CD4-positive, alpha-beta memory T cell (primary cell): ENCODE measurements at regions of chr9 and their contacts with region 1.

Region 1: DNA sequence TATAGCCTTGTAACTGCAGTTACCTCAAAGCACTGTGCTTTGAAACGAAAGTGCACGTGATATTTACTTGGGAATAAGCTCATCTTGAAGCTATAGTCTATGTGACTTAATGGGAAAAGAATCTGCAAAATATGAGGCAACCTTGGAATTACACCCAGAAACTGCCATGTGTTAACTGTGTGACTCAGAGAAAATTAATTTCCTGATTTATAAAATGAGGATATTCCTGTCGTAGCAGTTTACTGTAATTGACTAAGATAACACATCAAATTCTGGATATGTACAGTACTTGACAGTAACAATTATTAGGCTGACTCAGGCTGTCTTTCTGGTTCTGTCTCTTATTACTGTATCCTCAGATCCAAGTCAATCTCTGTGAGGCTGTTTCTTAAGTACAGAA is 1079.9 kb upstream of the ACO1 start:
- DNase-seq: no peak
- H3K4me3 ChIP-seq: no peak overlapping the region
- H3K4me3 Mint-ChIP-seq: no peak overlapping the region
- H3K27ac ChIP-seq: no peak overlapping the region
- H3K27ac Mint-ChIP-seq: no peak overlapping the region
- H3K4me1 ChIP-seq: peaks cover 25% of the 10 kb centered on the region
- H3K4me1 Mint-ChIP-seq: peaks cover 21 to 32% (median 26%) of the 10 kb centered on the region in 4 donors
- H3K27me3 ChIP-seq: no peaks in the 10 kb centered on the region
- H3K27me3 Mint-ChIP-seq: no peaks in the 10 kb centered on the region

Region 2: DNA sequence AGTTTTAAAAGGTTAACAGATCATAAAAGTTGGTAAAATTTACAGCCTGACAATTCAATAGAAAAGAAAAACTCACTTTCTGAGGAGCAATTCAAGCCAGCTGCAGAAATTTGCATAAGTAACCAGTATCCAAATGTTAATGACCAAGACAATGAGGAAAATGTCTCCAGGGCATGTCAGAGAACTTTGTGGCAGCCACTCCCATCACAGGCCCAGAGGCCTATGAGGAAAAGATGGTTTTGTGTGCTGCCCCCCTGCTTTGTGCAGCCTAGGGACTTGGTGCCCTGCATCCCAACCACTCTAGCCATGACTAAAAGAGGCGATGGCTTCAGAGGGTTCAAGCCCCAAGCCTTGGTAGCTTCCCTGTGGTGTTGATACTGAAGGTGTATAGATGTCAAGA is 326.6 kb before region 1 on chr9:
- CTCF ChIA-PET with region 1: no interaction called
- POLR2A ChIA-PET with region 1: no interaction called
- intact Hi-C with region 1: no loop called
- DNase-seq: no peak
- H3K4me3 ChIP-seq: no peak overlapping the region
- H3K4me3 Mint-ChIP-seq: no peak overlapping the region
- H3K27ac ChIP-seq: no peak overlapping the region
- H3K27ac Mint-ChIP-seq: no peak overlapping the region
- H3K4me1 ChIP-seq: no peaks in the 10 kb centered on the region
- H3K4me1 Mint-ChIP-seq: no peaks in the 10 kb centered on the region
- H3K27me3 ChIP-seq: no peaks in the 10 kb centered on the region
- H3K27me3 Mint-ChIP-seq: peaks cover 0 to 2% of the 10 kb centered on the region in 2 donors

Region 3: GRCh38 chr9:31335529-31336234 is 31.1 kb after region 1 on chr9:
- CTCF ChIA-PET with region 1: no interaction called
- POLR2A ChIA-PET with region 1: no interaction called
- intact Hi-C with region 1: loop called (anchors 5 kb)
- DNase-seq: peak in 4 of 5 donors; percentile 15 to 46 (median 18)
- H3K4me3 ChIP-seq: no peak overlapping the region
- H3K4me3 Mint-ChIP-seq: peak overlapping the region in 7 of 8 donors; percentile 43 to 79 (median 64)
- H3K27ac ChIP-seq: no peak overlapping the region
- H3K27ac Mint-ChIP-seq: peak overlapping the region; percentile 62 to 89 (median 80)
- H3K4me1 ChIP-seq: peaks cover 35% of the 10 kb centered on the region
- H3K4me1 Mint-ChIP-seq: peaks cover 5 to 28% (median 18%) of the 10 kb centered on the region in 4 donors
- H3K27me3 ChIP-seq: no peaks in the 10 kb centered on the region
- H3K27me3 Mint-ChIP-seq: no peaks in the 10 kb centered on the region

Region 4: DNA sequence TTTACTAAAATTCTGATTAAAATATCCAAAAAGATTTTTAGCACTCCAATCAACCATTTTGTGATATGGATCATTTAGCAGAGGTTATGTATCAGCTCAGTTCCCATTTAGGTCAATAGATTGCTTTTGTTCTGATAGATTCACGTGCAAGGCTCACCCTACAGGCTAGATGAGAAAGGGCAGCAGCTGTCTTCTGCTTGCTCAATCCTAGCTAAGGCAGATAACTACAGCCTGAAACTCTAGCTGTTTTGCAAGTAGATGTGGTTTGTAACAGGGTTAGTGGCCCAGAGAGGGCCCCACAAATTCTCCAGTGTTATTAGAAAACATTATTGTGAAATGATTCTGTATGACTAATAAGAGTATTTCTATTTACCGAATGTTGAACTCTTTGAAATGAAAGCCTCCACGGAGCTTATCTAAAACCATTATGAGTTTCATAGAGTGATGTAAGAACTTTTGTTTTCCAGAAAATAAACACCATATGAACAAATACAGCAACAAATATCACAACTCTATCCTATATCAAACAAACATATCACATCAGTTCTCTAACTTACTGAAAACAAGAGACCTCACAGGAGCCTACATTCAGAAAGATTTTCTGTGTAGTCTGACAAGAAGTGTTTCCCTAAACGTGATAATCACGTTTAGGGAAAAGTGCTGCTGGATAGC is 237.9 kb after region 1 on chr9:
- CTCF ChIA-PET with region 1: interaction called, 14 read pairs
- POLR2A ChIA-PET with region 1: interaction called, 4 read pairs
- intact Hi-C with region 1: loop called (anchors 1 kb)
- DNase-seq: peak; percentile 36 to 46 (median 40)
- H3K4me3 ChIP-seq: no peak overlapping the region
- H3K4me3 Mint-ChIP-seq: peak overlapping the region in 7 of 8 donors; percentile 32 to 72 (median 52)
- H3K27ac ChIP-seq: no peak overlapping the region
- H3K27ac Mint-ChIP-seq: peak overlapping the region in 5 of 7 donors; percentile 3 to 89 (median 88)
- H3K4me1 ChIP-seq: peaks cover 19% of the 10 kb centered on the region
- H3K4me1 Mint-ChIP-seq: peaks cover 17 to 22% (median 19%) of the 10 kb centered on the region in 4 donors
- H3K27me3 ChIP-seq: no peaks in the 10 kb centered on the region
- H3K27me3 Mint-ChIP-seq: no peaks in the 10 kb centered on the region

Region 5: GRCh38 chr9:31730398-31730797 is 425.8 kb after region 1 on chr9:
- CTCF ChIA-PET with region 1: no interaction called
- POLR2A ChIA-PET with region 1: no interaction called
- intact Hi-C with region 1: loop called (anchors 10 kb)
- DNase-seq: no peak
- H3K4me3 ChIP-seq: no peak overlapping the region
- H3K4me3 Mint-ChIP-seq: peak overlapping the region in 2 of 8 donors; percentile 12 to 13
- H3K27ac ChIP-seq: no peak overlapping the region
- H3K27ac Mint-ChIP-seq: peak overlapping the region in 1 of 7 donors; percentile 4
- H3K4me1 ChIP-seq: no peaks in the 10 kb centered on the region
- H3K4me1 Mint-ChIP-seq: peaks cover 0 to 4% (median under 1%) of the 10 kb centered on the region in 4 donors
- H3K27me3 ChIP-seq: no peaks in the 10 kb centered on the region
- H3K27me3 Mint-ChIP-seq: no peaks in the 10 kb centered on the region

Region 6: DNA sequence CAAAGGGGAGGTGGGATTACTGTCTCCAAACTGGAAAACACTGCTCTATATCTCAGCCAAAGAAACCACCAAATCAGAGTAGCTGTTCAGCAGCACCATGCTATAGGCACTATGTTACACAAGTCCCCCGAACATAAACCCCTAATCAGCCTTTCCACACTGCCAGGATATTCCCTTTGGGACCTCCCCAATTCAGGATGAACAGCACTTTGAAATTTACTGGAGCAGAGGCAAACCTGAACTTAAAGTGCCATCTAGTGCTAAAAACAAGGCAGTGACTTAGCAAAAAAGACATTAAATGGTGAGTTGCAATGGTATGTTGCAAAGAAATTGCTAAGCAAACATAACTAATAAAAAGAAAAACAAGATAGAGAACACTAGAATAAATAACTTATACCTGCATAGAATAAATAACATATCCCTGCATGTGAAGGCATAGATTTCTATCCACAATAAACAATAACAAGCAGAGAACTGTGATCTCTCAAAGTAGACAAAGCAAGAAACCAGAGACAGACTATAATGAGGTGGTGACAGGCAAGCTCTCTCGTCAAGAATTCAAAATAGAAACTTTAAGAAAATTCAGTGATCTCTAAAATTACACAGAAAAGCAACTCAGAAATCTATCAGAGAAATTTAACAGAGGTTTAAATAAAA is 495.5 kb after region 1 on chr9:
- CTCF ChIA-PET with region 1: no interaction called
- POLR2A ChIA-PET with region 1: interaction called, 3 read pairs
- intact Hi-C with region 1: loop called (anchors 1 kb)
- DNase-seq: peak in 3 of 5 donors; percentile 17 to 26 (median 21)
- H3K4me3 ChIP-seq: no peak overlapping the region
- H3K4me3 Mint-ChIP-seq: no peak overlapping the region
- H3K27ac ChIP-seq: no peak overlapping the region
- H3K27ac Mint-ChIP-seq: no peak overlapping the region
- H3K4me1 ChIP-seq: no peaks in the 10 kb centered on the region
- H3K4me1 Mint-ChIP-seq: peaks cover 9 to 17% (median 12%) of the 10 kb centered on the region in 4 donors
- H3K27me3 ChIP-seq: no peaks in the 10 kb centered on the region
- H3K27me3 Mint-ChIP-seq: peaks cover 0 to 2% of the 10 kb centered on the region in 2 donors